Activated CD4-positive, alpha-beta T cell treated with anti-CD3 and anti-CD28 coated beads, Interleukin-2, amount 10 ng/mL, durations not matched to agents 7 days and 5 days (primary cell): ENCODE measurements at regions of chr14 and their contacts with region 1.

Region 1: GRCh38 chr14:49928015-49928414 is 35.1 kb downstream of the ARF6 start:
- DNase-seq: no peak
- H3K4me3 Mint-ChIP-seq: no peak overlapping the region
- H3K27ac Mint-ChIP-seq: no peak overlapping the region
- H3K4me1 Mint-ChIP-seq: peaks cover 11% of the 10 kb centered on the region
- H3K27me3 Mint-ChIP-seq: no peaks in the 10 kb centered on the region

Region 2: GRCh38 chr14:49745191-49745590 is 182.8 kb before region 1 on chr14:
- CTCF ChIA-PET with region 1: no interaction called
- POLR2A ChIA-PET with region 1: no interaction called
- DNase-seq: no peak
- H3K4me3 Mint-ChIP-seq: no peak overlapping the region
- H3K27ac Mint-ChIP-seq: no peak overlapping the region
- H3K4me1 Mint-ChIP-seq: no peaks in the 10 kb centered on the region
- H3K27me3 Mint-ChIP-seq: no peaks in the 10 kb centered on the region

Region 3: GRCh38 chr14:49908432-49908781 is 19.6 kb before region 1 on chr14:
- CTCF ChIA-PET with region 1: interaction called, 4 read pairs
- POLR2A ChIA-PET with region 1: interaction called, 15 read pairs
- DNase-seq: no peak
- H3K4me3 Mint-ChIP-seq: no peak overlapping the region
- H3K27ac Mint-ChIP-seq: no peak overlapping the region
- H3K4me1 Mint-ChIP-seq: peaks cover 36% of the 10 kb centered on the region
- H3K27me3 Mint-ChIP-seq: no peaks in the 10 kb centered on the region

Region 4: DNA sequence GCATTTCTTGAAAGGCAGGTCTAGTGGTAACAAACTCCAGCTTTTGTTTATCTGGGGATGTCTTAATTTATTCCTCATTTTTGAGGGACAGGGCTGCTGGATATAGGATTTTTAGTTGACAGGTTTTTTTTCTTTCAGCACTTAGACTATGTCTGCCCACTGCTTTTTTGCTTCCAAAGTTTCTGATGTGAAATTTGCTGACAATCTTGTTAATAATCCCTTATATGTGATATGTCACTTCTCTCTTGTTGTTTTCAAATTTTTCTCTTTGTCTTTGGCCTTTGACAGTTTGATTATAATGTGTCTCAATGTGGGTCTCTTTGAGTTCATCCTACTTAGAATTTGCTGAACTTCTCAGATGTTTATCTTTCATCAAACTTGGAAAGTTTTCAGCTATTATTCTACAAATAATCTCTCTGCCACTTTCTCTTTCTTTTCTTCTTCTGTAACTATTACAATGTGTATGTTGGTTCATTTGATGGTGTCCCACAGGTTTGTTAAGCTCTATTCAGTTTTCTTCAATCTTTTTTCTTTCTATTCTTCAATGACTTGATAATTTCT is 641.8 kb after region 1 on chr14:
- CTCF ChIA-PET with region 1: no interaction called
- POLR2A ChIA-PET with region 1: no interaction called
- DNase-seq: no peak
- H3K4me3 Mint-ChIP-seq: no peak overlapping the region
- H3K27ac Mint-ChIP-seq: no peak overlapping the region
- H3K4me1 Mint-ChIP-seq: no peaks in the 10 kb centered on the region
- H3K27me3 Mint-ChIP-seq: peaks cover 10% of the 10 kb centered on the region